K562 (cell line): ENCODE measurements at regions of chr9 and their contacts with region 1.

Region 1: GRCh38 chr9:91978739-91979414 is 28.8 kb upstream of the ROR2 start:
- DNase-seq: peak in 3 of 4 experiments; percentile 22 to 61 (median 40)
- ATAC-seq: peak; percentile 92
- H3K4me3 ChIP-seq: no peak overlapping the region
- H3K27ac ChIP-seq: no peak overlapping the region
- H3K4me1 ChIP-seq: peaks cover 0 to 2% of the 10 kb centered on the region in 2 experiments; a peak in 1 of 5 replicates
- H3K27me3 ChIP-seq: peaks cover 3 to 5% of the 10 kb centered on the region in 2 experiments; a peak in 3 of 5 replicates
- CTCF ChIP-seq: peak; percentile 61 to 83 (median 75)
- EP300 ChIP-seq: no peak
- POLR2A ChIP-seq: no peak
- RAD21 ChIP-seq: peak; percentile 63 to 84

Region 2: DNA sequence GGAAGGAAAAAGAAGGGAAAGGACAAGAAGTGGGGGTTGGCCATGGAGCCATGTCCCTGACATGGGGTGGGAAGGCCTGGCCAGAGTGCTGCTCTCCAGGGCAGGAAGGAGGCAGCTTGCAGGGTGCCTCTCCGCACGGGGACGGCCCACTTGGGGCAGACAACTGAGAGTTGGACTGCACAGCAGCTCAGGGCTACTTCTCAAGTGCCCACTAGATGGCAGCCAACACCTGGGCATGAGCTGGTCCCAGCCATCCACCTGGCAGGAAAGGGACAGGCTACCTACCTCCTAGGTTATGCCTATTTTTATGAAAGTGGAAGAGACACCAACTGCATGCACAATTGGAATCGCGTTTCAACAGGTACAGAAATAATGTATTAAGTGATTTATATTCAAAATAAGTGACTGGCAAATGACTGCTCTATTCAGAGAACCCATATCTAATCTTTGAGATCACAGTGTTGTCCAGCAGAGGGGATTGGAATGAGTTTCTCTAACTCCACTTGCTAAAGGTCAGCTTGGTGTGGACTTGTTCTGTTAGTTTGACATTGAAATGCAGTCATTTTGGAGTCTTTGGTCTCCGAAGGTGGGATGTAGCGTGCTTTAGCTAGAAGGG is 1063.9 kb before region 1 on chr9:
- CTCF ChIA-PET with region 1: no interaction called
- POLR2A ChIA-PET with region 1: no interaction called
- in situ Hi-C with region 1: loop called (anchors 25 kb)
- intact Hi-C with region 1: no loop called
- DNase-seq: peak; percentile 72 to 76 (median 75)
- ATAC-seq: peak; percentile 98
- H3K4me3 ChIP-seq: no peak overlapping the region
- H3K27ac ChIP-seq: no peak overlapping the region
- H3K4me1 ChIP-seq: no peaks in the 10 kb centered on the region
- H3K27me3 ChIP-seq: peaks cover 0 to 22% of the 10 kb centered on the region in 2 experiments; a peak in 2 of 5 replicates
- CTCF ChIP-seq: peak; percentile 78 to 84 (median 80)
- EP300 ChIP-seq: no peak
- POLR2A ChIP-seq: no peak
- RAD21 ChIP-seq: peak; percentile 78 to 88

Region 3: DNA sequence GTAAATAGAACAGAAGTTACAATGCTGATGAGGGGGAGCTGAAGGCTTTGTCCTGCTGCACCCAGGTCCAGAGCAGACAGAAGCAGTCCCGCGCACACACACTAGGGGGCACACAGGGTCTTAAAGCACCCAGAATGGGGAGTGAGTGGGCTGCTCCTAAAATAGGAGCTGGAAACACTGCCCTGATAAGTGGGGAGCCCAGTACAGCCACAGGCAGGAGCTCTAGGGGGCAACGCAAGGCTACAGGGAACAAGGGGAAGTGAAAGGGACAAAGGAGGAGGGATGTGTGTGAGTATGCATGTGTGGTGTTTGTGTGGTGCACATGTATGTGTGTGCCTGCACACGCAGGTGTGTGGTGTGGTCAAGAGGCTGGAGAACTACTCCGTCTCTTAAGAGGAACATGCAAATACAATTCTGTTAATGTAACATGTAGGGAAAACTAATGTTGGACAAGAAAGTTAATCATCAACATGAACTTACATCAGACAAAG is 220.3 kb before region 1 on chr9:
- CTCF ChIA-PET with region 1: interaction called, 3 read pairs
- POLR2A ChIA-PET with region 1: no interaction called
- in situ Hi-C with region 1: no loop called
- intact Hi-C with region 1: loop called (anchors 5 kb)
- DNase-seq: peak; percentile 71 to 80 (median 76)
- ATAC-seq: peak; percentile 99
- H3K4me3 ChIP-seq: no peak overlapping the region
- H3K27ac ChIP-seq: no peak overlapping the region
- H3K4me1 ChIP-seq: peaks cover 3 to 4% of the 10 kb centered on the region in 2 experiments; a peak in 4 of 5 replicates
- H3K27me3 ChIP-seq: no peaks in the 10 kb centered on the region
- CTCF ChIP-seq: peak; percentile 81 to 87 (median 86)
- EP300 ChIP-seq: no peak
- POLR2A ChIP-seq: no peak
- RAD21 ChIP-seq: peak; percentile 56 to 85

Region 4: GRCh38 chr9:91775011-91775707 is 203.7 kb before region 1 on chr9:
- CTCF ChIA-PET with region 1: interaction called, 4 read pairs
- POLR2A ChIA-PET with region 1: no interaction called
- in situ Hi-C with region 1: no loop called
- intact Hi-C with region 1: loop called (anchors 1 kb)
- DNase-seq: peak; percentile 74 to 79 (median 77)
- ATAC-seq: peak; percentile 91
- H3K4me3 ChIP-seq: no peak overlapping the region
- H3K27ac ChIP-seq: no peak overlapping the region
- H3K4me1 ChIP-seq: peaks cover 5 to 6% of the 10 kb centered on the region in 2 experiments; a peak in 4 of 5 replicates
- H3K27me3 ChIP-seq: no peaks in the 10 kb centered on the region
- CTCF ChIP-seq: peak; percentile 76 to 87 (median 81)
- EP300 ChIP-seq: no peak
- POLR2A ChIP-seq: no peak
- RAD21 ChIP-seq: peak; percentile 86 to 90